GM12878 (cell line): ENCODE measurements at regions of chr2 and their contacts with region 1.

Region 1: GRCh38 chr2:43943809-43944452 is 51.9 kb downstream of the LRPPRC start:
- DNase-seq: no peak
- ATAC-seq: no peak
- H3K4me3 ChIP-seq: no peak overlapping the region
- H3K27ac ChIP-seq: no peak overlapping the region
- H3K4me1 ChIP-seq: no peaks in the 10 kb centered on the region
- H3K27me3 ChIP-seq: no peaks in the 10 kb centered on the region
- CTCF ChIP-seq: no peak
- EP300 ChIP-seq: no peak
- POLR2A ChIP-seq: no peak
- RAD21 ChIP-seq: no peak

Region 2: GRCh38 chr2:43774617-43775016 is 169.3 kb before region 1 on chr2:
- CTCF ChIA-PET with region 1: no interaction called
- POLR2A ChIA-PET with region 1: no interaction called
- RAD21 ChIA-PET with region 1: no interaction called
- SMC1A ChIA-PET with region 1: no interaction called
- in situ Hi-C with region 1: no loop called
- intact Hi-C with region 1: no loop called
- DNase-seq: no peak
- ATAC-seq: no peak
- H3K4me3 ChIP-seq: peak overlapping the region; percentile 84
- H3K27ac ChIP-seq: no peak overlapping the region
- H3K4me1 ChIP-seq: no peaks in the 10 kb centered on the region
- H3K27me3 ChIP-seq: no peaks in the 10 kb centered on the region
- CTCF ChIP-seq: no peak
- EP300 ChIP-seq: no peak
- POLR2A ChIP-seq: no peak
- RAD21 ChIP-seq: no peak

Region 3: DNA sequence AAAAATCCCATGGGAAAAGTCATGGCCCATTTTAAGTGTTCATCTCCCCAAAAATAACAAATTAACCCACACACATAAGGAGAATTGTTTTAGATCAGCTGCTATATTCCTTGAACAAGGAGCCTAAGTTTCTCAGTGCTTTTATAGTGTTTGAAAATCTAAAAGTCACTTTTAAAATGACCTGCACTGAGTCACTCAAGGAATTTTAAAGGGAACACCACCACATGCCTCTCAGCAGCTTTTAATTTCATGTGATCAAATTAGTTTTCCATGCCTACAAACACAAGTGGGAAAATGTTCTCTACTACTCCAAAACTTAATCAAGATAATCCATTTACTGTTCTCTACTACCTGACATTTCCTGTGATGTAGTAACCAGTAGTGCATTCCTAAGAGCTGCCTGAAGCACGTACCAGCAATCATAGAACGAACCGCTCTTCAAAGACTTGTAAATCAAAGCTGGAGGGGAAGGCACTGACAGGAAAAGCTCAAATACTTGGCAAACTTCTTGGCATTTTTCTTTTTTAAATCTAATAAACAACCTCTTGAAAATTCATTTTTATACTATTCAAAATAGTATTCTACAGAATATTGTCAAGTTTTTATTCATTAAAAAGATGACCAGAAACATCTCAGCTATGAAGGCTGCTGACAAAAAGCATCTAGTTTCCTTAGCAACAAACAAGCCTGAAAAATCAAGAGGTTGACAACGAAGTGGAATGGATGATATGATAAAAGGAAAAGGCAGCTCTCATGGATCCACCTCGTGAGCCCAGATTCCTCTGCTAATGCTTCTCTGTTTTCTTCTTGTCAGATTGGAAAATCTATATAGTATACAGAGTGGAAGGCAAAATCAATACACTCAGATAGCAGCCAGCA is 14.7 kb after region 1 on chr2:
- CTCF ChIA-PET with region 1: interaction called, 5 read pairs
- POLR2A ChIA-PET with region 1: no interaction called
- RAD21 ChIA-PET with region 1: no interaction called
- SMC1A ChIA-PET with region 1: interaction called, 8 read pairs
- in situ Hi-C with region 1: no loop called
- intact Hi-C with region 1: loop called (anchors 2 kb)
- DNase-seq: no peak
- ATAC-seq: no peak
- H3K4me3 ChIP-seq: no peak overlapping the region
- H3K27ac ChIP-seq: no peak overlapping the region
- H3K4me1 ChIP-seq: no peaks in the 10 kb centered on the region
- H3K27me3 ChIP-seq: no peaks in the 10 kb centered on the region
- CTCF ChIP-seq: no peak
- EP300 ChIP-seq: no peak
- POLR2A ChIP-seq: no peak
- RAD21 ChIP-seq: no peak

Region 4: DNA sequence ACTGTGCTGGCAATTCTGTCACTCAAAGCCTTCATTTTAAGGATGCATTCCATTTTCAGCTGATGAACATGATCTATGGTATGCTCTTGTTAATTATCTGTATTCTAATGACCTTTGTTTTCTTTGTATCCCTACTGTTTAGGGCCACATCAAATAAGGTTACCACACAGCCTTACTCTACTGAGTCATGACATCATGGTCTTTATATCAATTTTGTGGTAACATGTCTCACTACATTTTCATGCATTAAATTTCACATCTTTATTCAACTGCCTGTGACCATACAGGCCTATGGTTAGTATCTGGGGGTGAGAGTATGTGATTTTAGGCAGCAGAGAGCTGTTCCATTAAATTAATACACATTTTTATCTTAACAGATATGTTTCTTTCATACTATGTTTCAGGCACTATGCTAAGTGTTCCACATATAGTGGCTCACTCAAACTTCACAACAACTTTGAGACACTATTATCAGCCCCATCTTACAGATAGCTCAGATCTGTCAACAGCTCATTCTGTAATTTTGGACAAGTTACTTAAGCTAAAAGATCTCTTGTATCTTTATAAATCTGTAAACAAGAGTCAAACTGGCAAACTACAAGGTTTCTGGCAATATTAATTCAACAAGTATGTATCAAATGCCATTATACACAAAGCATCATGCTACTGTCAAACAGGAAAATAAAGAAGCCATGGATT is 33.9 kb after region 1 on chr2:
- CTCF ChIA-PET with region 1: no interaction called
- POLR2A ChIA-PET with region 1: no interaction called
- RAD21 ChIA-PET with region 1: no interaction called
- SMC1A ChIA-PET with region 1: interaction called, 3 read pairs
- in situ Hi-C with region 1: no loop called
- intact Hi-C with region 1: loop called (anchors 5 kb)
- DNase-seq: no peak
- ATAC-seq: no peak
- H3K4me3 ChIP-seq: no peak overlapping the region
- H3K27ac ChIP-seq: no peak overlapping the region
- H3K4me1 ChIP-seq: no peaks in the 10 kb centered on the region
- H3K27me3 ChIP-seq: no peaks in the 10 kb centered on the region
- CTCF ChIP-seq: no peak
- EP300 ChIP-seq: no peak
- POLR2A ChIP-seq: no peak
- RAD21 ChIP-seq: no peak